ENCODE measurements at regions of chr9 and their contacts with region 1.

Region 1: DNA sequence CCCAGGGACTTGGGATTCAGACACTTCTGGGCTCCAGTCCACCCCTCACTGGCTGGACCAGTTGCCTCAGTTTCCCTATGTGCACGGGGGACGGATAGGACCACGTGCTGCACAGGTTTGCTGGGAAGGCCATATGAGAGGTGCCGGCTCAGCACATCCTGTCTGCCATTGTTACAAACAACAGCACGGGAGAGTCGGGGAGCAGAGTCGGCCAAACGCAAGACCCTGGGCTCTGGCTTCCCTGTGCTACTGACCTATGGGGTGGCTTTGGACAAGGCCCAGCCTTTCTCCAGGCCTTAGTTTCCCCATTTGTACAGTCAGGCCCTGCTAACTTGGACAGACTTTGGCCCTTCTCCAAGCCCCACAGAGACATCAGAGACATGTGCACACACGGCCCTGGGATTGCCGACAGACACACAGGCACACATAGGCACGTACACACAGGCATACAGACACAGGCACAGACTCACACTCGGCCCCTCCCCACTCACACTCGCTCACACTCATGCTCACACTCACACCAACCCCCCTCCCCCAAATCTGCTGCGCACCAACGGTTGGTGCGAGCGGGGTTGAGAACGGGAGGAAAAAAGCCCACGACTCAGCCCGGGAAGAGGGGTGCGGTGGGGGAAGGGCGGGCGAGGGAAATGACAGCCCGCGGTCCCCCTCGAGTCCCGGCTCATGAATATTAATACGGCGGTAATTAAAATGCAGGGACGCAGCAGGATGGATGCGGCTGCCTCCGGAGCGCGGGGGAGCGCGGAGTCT is 133.1 kb downstream of the C9orf50 start:
- DNase-seq: peak; percentile 76
- ATAC-seq: peak; percentile 34
- H3K4me3 Mint-ChIP-seq: peak overlapping the region; percentile 93
- H3K27ac Mint-ChIP-seq: peak overlapping the region; percentile 96
- H3K4me1 Mint-ChIP-seq: peaks cover 66% of the 10 kb centered on the region
- H3K27me3 Mint-ChIP-seq: no peaks in the 10 kb centered on the region

Region 2: GRCh38 chr9:129148463-129149204 is 339.2 kb before region 1 on chr9:
- CTCF ChIA-PET with region 1: no interaction called
- POLR2A ChIA-PET with region 1: no interaction called
- intact Hi-C with region 1: no loop called
- DNase-seq: no peak
- ATAC-seq: no peak
- H3K4me3 Mint-ChIP-seq: no peak overlapping the region
- H3K27ac Mint-ChIP-seq: no peak overlapping the region
- H3K4me1 Mint-ChIP-seq: no peaks in the 10 kb centered on the region
- H3K27me3 Mint-ChIP-seq: no peaks in the 10 kb centered on the region

Region 3: GRCh38 chr9:129237195-129237611 is 250.6 kb before region 1 on chr9:
- CTCF ChIA-PET with region 1: interaction called, 3 read pairs
- POLR2A ChIA-PET with region 1: no interaction called
- intact Hi-C with region 1: loop called in 1 of 2 experiments (anchors 5 kb)
- DNase-seq: peak; percentile 84
- ATAC-seq: peak; percentile 80
- H3K4me3 Mint-ChIP-seq: peak overlapping the region; percentile 71
- H3K27ac Mint-ChIP-seq: peak overlapping the region; percentile 94
- H3K4me1 Mint-ChIP-seq: peaks cover 51% of the 10 kb centered on the region
- H3K27me3 Mint-ChIP-seq: no peaks in the 10 kb centered on the region

Region 4: DNA sequence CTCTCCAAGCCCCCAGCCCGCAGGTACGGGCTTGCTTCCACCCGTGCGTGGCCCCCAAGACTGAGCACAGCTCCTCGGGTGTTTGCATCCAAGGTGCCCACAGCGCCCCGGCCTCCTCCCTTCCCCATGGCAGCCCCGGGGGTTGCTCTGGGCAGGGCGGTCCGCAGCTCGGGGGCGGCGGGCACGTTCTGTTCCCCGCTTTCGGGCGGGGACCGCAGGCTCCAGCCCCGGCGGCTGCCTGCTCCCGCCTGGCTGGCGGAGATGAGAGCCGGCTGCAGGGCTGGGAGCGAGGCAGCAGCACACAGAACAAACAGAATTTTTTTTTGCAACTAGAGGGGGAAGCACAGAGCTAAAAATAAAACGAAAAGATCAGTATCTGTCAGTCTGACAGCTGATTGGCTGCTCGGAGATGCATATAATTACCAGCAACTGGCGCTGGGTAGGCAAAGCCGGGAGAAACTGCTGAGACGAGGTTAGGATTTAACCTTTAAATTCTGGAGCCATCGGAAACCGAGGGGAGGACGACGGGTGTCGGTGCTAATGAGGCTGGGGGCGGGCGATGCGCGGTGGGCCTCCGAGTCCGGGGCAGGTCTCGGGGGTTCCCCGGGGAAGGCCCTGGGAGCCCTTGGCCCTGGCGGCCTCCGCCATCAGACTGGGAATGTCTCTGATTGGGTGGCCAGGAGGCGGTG is 167.1 kb before region 1 on chr9:
- CTCF ChIA-PET with region 1: no interaction called
- POLR2A ChIA-PET with region 1: no interaction called
- intact Hi-C with region 1: loop called in 1 of 2 experiments (anchors 2 kb)
- DNase-seq: peak; percentile 71
- ATAC-seq: peak; percentile 84
- H3K4me3 Mint-ChIP-seq: peak overlapping the region; percentile 62
- H3K27ac Mint-ChIP-seq: peak overlapping the region; percentile 78
- H3K4me1 Mint-ChIP-seq: peaks cover 24% of the 10 kb centered on the region
- H3K27me3 Mint-ChIP-seq: no peaks in the 10 kb centered on the region

Region 5: GRCh38 chr9:129584136-129584535 is 96.3 kb after region 1 on chr9:
- CTCF ChIA-PET with region 1: no interaction called
- POLR2A ChIA-PET with region 1: no interaction called
- intact Hi-C with region 1: loop called in 1 of 2 experiments (anchors 5 kb)
- DNase-seq: peak; percentile 76
- ATAC-seq: peak; percentile 75
- H3K4me3 Mint-ChIP-seq: no peak overlapping the region
- H3K27ac Mint-ChIP-seq: peak overlapping the region; percentile 53
- H3K4me1 Mint-ChIP-seq: peaks cover 53% of the 10 kb centered on the region
- H3K27me3 Mint-ChIP-seq: no peaks in the 10 kb centered on the region

Region 6: GRCh38 chr9:129626079-129626624 is 138.3 kb after region 1 on chr9 and contains the start of gene NTMT1:
- CTCF ChIA-PET with region 1: interaction called, 4 read pairs
- POLR2A ChIA-PET with region 1: no interaction called
- intact Hi-C with region 1: loop called in 1 of 2 experiments (anchors 1 kb)
- DNase-seq: peak; percentile 95
- ATAC-seq: peak; percentile 76
- H3K4me3 Mint-ChIP-seq: peak within 1 kb of the TSS; percentile 77
- H3K27ac Mint-ChIP-seq: peak within 1 kb of the TSS; percentile 93
- H3K4me1 Mint-ChIP-seq: peaks cover 52% of the 10 kb centered on the region
- H3K27me3 Mint-ChIP-seq: peaks cover 4% of the 10 kb centered on the region
- total RNA-seq, gene NTMT1: 50.1 to 69.2 TPM

Region 7: GRCh38 chr9:129894120-129894823 is 406.4 kb after region 1 on chr9:
- CTCF ChIA-PET with region 1: no interaction called
- POLR2A ChIA-PET with region 1: no interaction called
- intact Hi-C with region 1: no loop called
- DNase-seq: peak; percentile 45
- ATAC-seq: no peak
- H3K4me3 Mint-ChIP-seq: peak overlapping the region; percentile 20
- H3K27ac Mint-ChIP-seq: peak overlapping the region; percentile 99
- H3K4me1 Mint-ChIP-seq: peaks cover 80% of the 10 kb centered on the region
- H3K27me3 Mint-ChIP-seq: no peaks in the 10 kb centered on the region